ENCODE measurements at regions of chr5 and their contacts with region 1.

Region 1: GRCh38 chr5:42423285-42424165 is at the start of gene GHR:
- DNase-seq: peak in 1 of 2 donors; percentile 91
- H3K4me3 ChIP-seq: peak within 1 kb of the TSS; percentile 68 to 73
- H3K27ac ChIP-seq: peak within 1 kb of the TSS; percentile 69 to 77
- H3K4me1 ChIP-seq: peaks cover 0 to 4% of the 10 kb centered on the region in 2 donors
- H3K27me3 ChIP-seq: no peaks in the 10 kb centered on the region
- CTCF ChIP-seq: peak; percentile 69 to 83 (median 79)
- total RNA-seq, gene GHR: 6.4 TPM

Region 2: GRCh38 chr5:42583322-42583721 is 159.8 kb after region 1 on chr5:
- intact Hi-C with region 1: loop called (anchors 1 kb)
- DNase-seq: peak in 1 of 2 donors; percentile 66
- H3K4me3 ChIP-seq: no peak overlapping the region
- H3K27ac ChIP-seq: no peak overlapping the region
- H3K4me1 ChIP-seq: peaks cover 0 to 19% of the 10 kb centered on the region in 2 donors
- H3K27me3 ChIP-seq: no peaks in the 10 kb centered on the region
- CTCF ChIP-seq: peak; percentile 48 to 80 (median 72)

Region 3: DNA sequence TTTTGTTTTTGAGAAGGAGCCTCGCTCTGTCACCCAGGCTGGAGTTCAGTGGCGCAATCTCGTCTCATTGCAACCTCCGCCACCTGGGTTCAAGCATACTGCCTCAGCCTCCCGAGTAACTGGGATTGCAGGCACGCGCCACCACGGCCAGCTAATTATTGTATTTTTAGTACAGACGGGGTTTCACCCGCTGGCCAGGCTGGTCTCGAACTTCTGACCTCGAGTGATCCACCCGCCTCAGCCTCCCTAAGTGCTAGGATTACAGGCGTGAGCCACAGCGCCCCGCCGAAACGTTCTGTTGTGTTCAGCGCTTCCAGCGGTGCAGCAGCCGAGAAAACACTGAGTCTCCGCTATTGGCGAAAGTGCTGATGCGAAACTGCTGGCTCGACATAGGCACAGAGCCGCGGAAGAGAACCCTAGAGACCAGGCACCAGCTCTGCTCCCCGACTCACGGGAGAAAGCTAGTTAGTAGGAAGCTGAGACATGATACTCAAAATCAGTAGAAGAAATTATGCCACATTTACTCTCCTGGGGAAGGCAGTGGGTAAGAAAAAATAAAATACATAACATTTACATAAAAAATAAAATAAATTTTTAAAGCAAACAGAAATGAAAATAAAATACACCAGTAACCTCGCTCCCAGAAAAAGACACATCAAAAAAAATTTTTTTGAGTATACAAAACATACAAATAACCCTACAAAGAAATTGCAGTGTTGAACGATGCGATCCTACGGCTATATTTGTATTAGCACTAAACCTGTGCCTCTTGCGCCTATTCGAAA is 585.0 kb after region 1 on chr5:
- intact Hi-C with region 1: no loop called
- DNase-seq: peak in 1 of 2 donors; percentile 86
- H3K4me3 ChIP-seq: peak overlapping the region; percentile 50 to 66
- H3K27ac ChIP-seq: peak overlapping the region; percentile 81 to 83
- H3K4me1 ChIP-seq: peaks cover 0 to 4% of the 10 kb centered on the region in 2 donors
- H3K27me3 ChIP-seq: no peaks in the 10 kb centered on the region
- CTCF ChIP-seq: no peak